ENCODE measurements at regions of chr2 and their contacts with region 1.

Region 1: GRCh38 chr2:138787053-138787666 is 7.0 kb upstream of the NXPH2 start:
- DNase-seq: peak; percentile 44
- ATAC-seq: peak; percentile 66
- H3K4me3 ChIP-seq: no peak overlapping the region
- H3K27ac ChIP-seq: no peak overlapping the region
- H3K4me1 ChIP-seq: no peaks in the 10 kb centered on the region
- H3K27me3 ChIP-seq: peaks cover 0 to 23% of the 10 kb centered on the region in 2 experiments; a peak in 2 of 5 replicates
- CTCF ChIP-seq: peak; percentile 79
- EP300 ChIP-seq: no peak
- POLR2A ChIP-seq: no peak
- RAD21 ChIP-seq: peak; percentile 56

Region 2: GRCh38 chr2:137865954-137866540 is 921.1 kb before region 1 on chr2:
- CTCF ChIA-PET with region 1: interaction called, 13 read pairs
- POLR2A ChIA-PET with region 1: no interaction called
- in situ Hi-C with region 1: no loop called
- intact Hi-C with region 1: loop called (anchors 1 kb)
- DNase-seq: peak; percentile 77
- ATAC-seq: peak; percentile 98
- H3K4me3 ChIP-seq: no peak overlapping the region
- H3K27ac ChIP-seq: no peak overlapping the region
- H3K4me1 ChIP-seq: no peaks in the 10 kb centered on the region
- H3K27me3 ChIP-seq: no peaks in the 10 kb centered on the region
- CTCF ChIP-seq: peak; percentile 92
- EP300 ChIP-seq: no peak
- POLR2A ChIP-seq: no peak
- RAD21 ChIP-seq: peak; percentile 84

Region 3: DNA sequence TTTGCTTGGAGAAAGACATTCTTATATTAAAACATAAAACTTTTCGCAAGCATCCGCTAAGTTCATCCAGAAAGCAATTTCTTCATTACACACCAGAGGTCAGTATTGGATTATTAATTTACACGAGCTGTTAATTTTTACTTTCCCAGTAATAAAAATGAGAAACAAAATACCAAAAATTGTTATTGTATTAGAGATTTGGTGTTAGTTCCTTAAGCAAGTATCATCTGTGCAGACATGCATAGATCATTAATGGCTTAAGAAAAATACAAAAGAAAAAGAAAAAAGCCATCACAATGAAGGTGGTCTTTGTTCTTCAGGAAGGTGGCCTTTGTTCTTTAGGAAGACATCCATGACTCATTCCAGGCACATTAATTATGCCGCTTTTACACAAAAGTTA is 876.5 kb before region 1 on chr2:
- CTCF ChIA-PET with region 1: interaction called, 10 read pairs
- POLR2A ChIA-PET with region 1: no interaction called
- in situ Hi-C with region 1: no loop called
- intact Hi-C with region 1: loop called (anchors 1 kb)
- DNase-seq: peak; percentile 55
- ATAC-seq: no peak
- H3K4me3 ChIP-seq: no peak overlapping the region
- H3K27ac ChIP-seq: no peak overlapping the region
- H3K4me1 ChIP-seq: peaks cover 42% of the 10 kb centered on the region
- H3K27me3 ChIP-seq: no peaks in the 10 kb centered on the region
- CTCF ChIP-seq: peak; percentile 66
- EP300 ChIP-seq: peak in 1 of 2 experiments; percentile 30; a peak in 1 of 4 replicates
- POLR2A ChIP-seq: no peak
- RAD21 ChIP-seq: peak; percentile 84

Region 4: DNA sequence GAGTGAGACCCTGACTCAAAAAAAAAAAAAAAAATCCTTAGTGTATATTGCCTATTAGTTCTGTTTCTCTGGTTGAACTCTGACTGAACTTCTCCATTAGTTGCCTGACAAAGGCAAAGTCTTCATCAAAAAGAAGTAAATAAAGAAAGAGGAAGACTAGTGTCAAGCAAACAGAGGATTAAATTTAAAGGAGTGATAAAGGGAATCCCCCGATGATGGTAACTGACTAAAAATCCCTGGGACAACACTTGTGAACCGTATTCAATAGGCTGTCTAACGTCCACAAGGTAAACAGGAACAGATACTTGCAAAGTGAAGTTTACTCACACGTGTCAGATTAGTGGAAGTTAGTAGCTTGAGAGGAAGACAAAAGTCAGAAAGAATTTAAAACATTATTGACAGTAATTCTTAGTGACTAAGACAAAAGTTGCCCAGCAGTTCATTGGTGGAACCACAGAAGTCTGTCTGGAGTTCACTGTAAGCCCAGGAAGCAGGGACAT is 311.8 kb before region 1 on chr2:
- CTCF ChIA-PET with region 1: no interaction called
- POLR2A ChIA-PET with region 1: no interaction called
- in situ Hi-C with region 1: no loop called
- intact Hi-C with region 1: loop called (anchors 5 kb)
- DNase-seq: peak; percentile 77
- ATAC-seq: peak; percentile 85
- H3K4me3 ChIP-seq: no peak overlapping the region
- H3K27ac ChIP-seq: peak overlapping the region; percentile 10
- H3K4me1 ChIP-seq: peaks cover 23% of the 10 kb centered on the region
- H3K27me3 ChIP-seq: no peaks in the 10 kb centered on the region
- CTCF ChIP-seq: no peak
- EP300 ChIP-seq: peak in 1 of 2 experiments; percentile 63; a peak in 1 of 4 replicates
- POLR2A ChIP-seq: no peak
- RAD21 ChIP-seq: no peak

Region 5: GRCh38 chr2:138610216-138610953 is 176.8 kb before region 1 on chr2:
- CTCF ChIA-PET with region 1: no interaction called
- POLR2A ChIA-PET with region 1: no interaction called
- in situ Hi-C with region 1: no loop called
- intact Hi-C with region 1: no loop called
- DNase-seq: no peak
- ATAC-seq: no peak
- H3K4me3 ChIP-seq: no peak overlapping the region
- H3K27ac ChIP-seq: no peak overlapping the region
- H3K4me1 ChIP-seq: peaks cover 26% of the 10 kb centered on the region
- H3K27me3 ChIP-seq: no peaks in the 10 kb centered on the region
- CTCF ChIP-seq: no peak
- EP300 ChIP-seq: no peak
- POLR2A ChIP-seq: no peak
- RAD21 ChIP-seq: no peak

Region 6: GRCh38 chr2:138622613-138623012 is 164.5 kb before region 1 on chr2:
- CTCF ChIA-PET with region 1: no interaction called
- POLR2A ChIA-PET with region 1: no interaction called
- in situ Hi-C with region 1: no loop called
- intact Hi-C with region 1: loop called (anchors 10 kb)
- DNase-seq: no peak
- ATAC-seq: no peak
- H3K4me3 ChIP-seq: no peak overlapping the region
- H3K27ac ChIP-seq: no peak overlapping the region
- H3K4me1 ChIP-seq: peaks cover 6% of the 10 kb centered on the region; the same call in 1 of the 2 replicates
- H3K27me3 ChIP-seq: no peaks in the 10 kb centered on the region; a peak in 2 of 5 replicates
- CTCF ChIP-seq: no peak
- EP300 ChIP-seq: no peak
- POLR2A ChIP-seq: no peak
- RAD21 ChIP-seq: no peak